PC-9 (cell line): ENCODE measurements at regions of chr2 and their contacts with region 1.

Region 1: DNA sequence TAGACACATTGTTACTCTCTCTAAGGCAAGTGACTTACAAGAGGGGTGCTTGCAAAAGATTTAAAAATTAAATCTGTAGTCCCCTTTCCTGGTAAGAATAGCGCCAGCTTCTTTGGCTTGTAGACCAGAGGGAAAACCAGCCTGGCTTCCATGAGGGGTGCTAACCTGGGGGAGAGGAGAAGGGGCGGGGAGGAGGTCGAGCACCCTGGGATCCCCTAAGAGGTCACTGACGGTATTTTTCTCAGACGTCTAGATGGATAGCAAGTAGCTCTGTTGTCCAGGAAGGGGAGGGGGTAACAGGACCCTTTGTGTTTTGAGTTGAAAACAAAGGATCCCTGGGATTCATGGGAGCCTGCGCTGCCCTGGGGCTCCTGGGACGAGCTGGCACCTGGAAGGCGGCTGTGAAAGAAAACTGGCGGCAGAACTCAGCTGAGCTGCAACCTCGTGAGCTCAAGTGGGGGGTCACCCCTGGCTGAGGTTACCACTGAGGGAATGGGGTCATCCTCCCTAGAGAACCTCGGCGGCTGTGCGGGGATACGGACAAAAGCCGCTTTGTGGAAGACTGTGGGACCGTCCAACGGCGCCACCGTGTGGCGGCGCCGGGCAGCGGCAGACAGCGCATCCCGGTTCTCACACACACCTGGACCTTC is 37.8 kb upstream of the MRPL19 start:
- DNase-seq: peak; percentile 52 to 70
- H3K4me3 ChIP-seq: peak overlapping the region; percentile 40; the same call in 1 of the 2 replicates
- H3K27ac ChIP-seq: peak overlapping the region; percentile 17; the same call in 1 of the 2 replicates
- H3K4me1 ChIP-seq: peaks cover 54% of the 10 kb centered on the region
- H3K27me3 ChIP-seq: no peaks in the 10 kb centered on the region
- CTCF ChIP-seq: peak; percentile 99

Region 2: GRCh38 chr2:75157430-75157829 is 451.4 kb before region 1 on chr2:
- CTCF ChIA-PET with region 1: no interaction called
- POLR2A ChIA-PET with region 1: no interaction called
- intact Hi-C with region 1: loop called (anchors 10 kb)
- DNase-seq: peak; percentile 10 to 58
- H3K4me3 ChIP-seq: no peak overlapping the region
- H3K27ac ChIP-seq: no peak overlapping the region
- H3K4me1 ChIP-seq: peaks cover 39% of the 10 kb centered on the region
- H3K27me3 ChIP-seq: no peaks in the 10 kb centered on the region
- CTCF ChIP-seq: peak; percentile 68

Region 3: GRCh38 chr2:75361486-75361885 is 247.3 kb before region 1 on chr2:
- CTCF ChIA-PET with region 1: no interaction called
- POLR2A ChIA-PET with region 1: no interaction called
- intact Hi-C with region 1: no loop called
- DNase-seq: no peak
- H3K4me3 ChIP-seq: no peak overlapping the region
- H3K27ac ChIP-seq: no peak overlapping the region
- H3K4me1 ChIP-seq: no peaks in the 10 kb centered on the region
- H3K27me3 ChIP-seq: no peaks in the 10 kb centered on the region
- CTCF ChIP-seq: no peak

Region 4: DNA sequence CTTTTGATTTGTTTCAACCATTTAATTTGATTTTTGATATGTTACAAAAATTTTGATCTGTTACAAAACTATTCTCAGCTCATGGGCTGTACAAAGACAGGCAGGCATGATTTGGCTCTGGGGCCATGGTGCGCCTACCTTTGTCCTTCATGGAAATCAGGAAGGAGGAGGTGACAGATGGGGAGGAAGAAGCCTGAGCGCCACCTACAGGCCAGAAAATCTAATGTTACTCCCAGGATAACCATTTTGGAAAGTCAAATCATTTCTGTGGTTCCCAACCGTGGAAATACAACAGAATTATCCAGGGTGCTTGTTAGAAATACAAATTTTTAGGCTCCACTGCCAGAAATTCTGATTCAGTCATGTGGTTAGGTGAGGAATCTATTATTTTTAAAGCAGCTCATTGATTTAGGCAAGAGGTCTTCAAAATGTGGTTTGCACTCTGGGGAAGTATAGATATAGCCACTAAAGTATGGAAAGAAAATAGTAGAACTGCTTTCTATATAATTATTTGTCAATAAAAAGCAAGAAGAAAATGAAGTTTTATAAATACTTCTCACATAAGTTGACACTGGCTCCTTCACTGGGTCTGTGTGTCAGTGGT is 142.0 kb before region 1 on chr2:
- CTCF ChIA-PET with region 1: interaction called, 14 read pairs
- POLR2A ChIA-PET with region 1: interaction called, 12 read pairs
- intact Hi-C with region 1: loop called (anchors 1 kb)
- DNase-seq: peak in 1 of 2 experiments; percentile 33
- H3K4me3 ChIP-seq: no peak overlapping the region
- H3K27ac ChIP-seq: no peak overlapping the region
- H3K4me1 ChIP-seq: peaks cover 14% of the 10 kb centered on the region; the same call in 1 of the 2 replicates
- H3K27me3 ChIP-seq: no peaks in the 10 kb centered on the region
- CTCF ChIP-seq: peak; percentile 73

Region 5: DNA sequence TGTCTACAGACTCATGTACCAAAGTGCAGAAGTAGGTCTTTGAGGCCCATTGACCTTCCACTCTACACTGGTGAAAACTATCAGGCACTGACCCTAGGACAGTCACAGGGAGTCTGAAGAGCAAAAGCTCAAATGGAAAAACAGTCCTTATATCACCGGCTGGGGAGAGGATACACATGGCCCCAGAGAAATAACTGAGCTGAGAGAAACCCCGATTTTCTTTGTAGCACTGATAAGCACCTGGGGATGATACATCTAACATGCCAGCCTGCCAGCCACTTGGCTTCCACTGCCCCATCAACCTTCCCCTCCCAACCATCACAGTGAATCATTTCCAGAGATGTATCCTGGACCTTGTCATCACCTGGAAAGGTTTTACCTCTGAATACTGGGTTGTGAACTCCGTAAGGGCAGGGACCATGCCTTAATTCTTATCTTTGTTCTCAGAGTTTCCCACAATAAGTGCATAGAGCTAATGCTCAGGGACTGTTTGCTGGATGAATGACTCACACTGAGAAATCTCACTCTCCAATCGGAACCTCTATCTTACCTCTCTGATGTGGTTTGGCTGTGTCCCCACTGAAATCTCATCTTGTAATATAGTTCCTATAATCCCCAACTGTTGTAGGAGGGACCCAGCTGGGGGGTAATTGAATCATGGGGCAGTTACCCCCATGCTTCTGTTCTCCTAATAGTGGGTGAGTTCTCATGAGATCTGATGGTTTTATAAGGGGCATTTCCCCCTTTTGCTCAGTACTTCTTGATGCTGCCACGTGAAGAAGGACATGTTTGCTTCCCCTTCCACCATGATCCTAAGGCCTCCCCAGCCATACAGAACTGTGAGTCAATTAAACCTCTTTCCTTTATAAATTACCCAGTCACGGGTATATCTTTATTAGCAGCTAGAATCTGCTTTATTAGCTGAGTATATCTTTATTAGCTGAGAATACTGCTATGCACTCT is 85.2 kb before region 1 on chr2:
- CTCF ChIA-PET with region 1: interaction called, 8 read pairs
- POLR2A ChIA-PET with region 1: no interaction called
- intact Hi-C with region 1: loop called (anchors 1 kb)
- DNase-seq: peak; percentile 52 to 99
- H3K4me3 ChIP-seq: no peak overlapping the region
- H3K27ac ChIP-seq: peak overlapping the region; percentile 17
- H3K4me1 ChIP-seq: peaks cover 59% of the 10 kb centered on the region
- H3K27me3 ChIP-seq: no peaks in the 10 kb centered on the region
- CTCF ChIP-seq: no peak

Region 6: DNA sequence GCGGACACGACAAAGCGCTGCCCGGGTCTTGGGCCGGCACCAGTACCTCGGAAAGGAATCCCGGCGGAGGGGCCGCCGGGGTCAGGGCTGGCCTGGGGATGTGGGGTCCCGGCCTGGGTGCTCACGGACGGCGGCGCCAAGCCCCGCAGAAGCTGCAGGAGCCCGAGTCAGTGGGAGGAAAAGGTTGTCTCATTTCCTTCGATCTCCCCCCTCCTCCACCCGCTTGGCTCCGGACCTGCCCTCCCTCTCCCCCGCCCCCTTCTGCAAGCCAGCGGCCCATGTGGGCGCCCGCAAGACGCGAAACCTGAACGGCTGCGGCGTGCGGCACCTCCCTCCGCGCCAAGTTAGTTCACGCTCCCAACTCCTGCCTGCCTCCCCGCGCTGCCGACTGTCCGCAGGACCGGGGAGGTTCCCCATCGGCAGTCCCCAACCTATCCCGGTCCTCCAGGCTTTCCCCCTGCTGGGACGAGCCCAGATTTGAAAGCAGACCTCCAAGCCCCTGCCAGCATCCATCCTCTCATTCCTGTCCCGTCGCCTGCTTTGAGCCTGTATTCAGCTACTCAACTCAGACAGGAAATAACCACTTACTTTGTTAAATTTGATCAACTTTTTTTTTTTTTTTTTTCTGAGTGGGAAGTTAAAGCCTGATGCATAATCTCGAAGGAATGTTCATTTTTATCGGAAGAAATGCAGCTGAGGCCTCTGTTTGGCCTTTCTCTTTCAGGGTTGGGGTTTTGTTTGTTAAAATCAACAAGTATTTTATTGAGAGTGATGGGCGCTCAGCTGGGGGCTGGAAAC is 47.8 kb before region 1 on chr2 and contains the start of gene EVA1A:
- CTCF ChIA-PET with region 1: interaction called, 19 read pairs
- POLR2A ChIA-PET with region 1: interaction called, 3 read pairs
- intact Hi-C with region 1: loop called (anchors 1 kb)
- DNase-seq: peak; percentile 61 to 68
- H3K4me3 ChIP-seq: peak within 1 kb of the TSS; percentile 74
- H3K27ac ChIP-seq: peak within 1 kb of the TSS; percentile 42
- H3K4me1 ChIP-seq: peaks cover 28% of the 10 kb centered on the region
- H3K27me3 ChIP-seq: no peaks in the 10 kb centered on the region
- CTCF ChIP-seq: no peak
- total RNA-seq, gene EVA1A: 10.8 and 18.2 TPM in 2 replicates

Region 7: GRCh38 chr2:75574114-75574513 is 34.7 kb before region 1 on chr2:
- CTCF ChIA-PET with region 1: interaction called, 7 read pairs
- POLR2A ChIA-PET with region 1: no interaction called
- intact Hi-C with region 1: loop called (anchors 1 kb)
- DNase-seq: no peak
- H3K4me3 ChIP-seq: no peak overlapping the region
- H3K27ac ChIP-seq: no peak overlapping the region
- H3K4me1 ChIP-seq: peaks cover 27% of the 10 kb centered on the region
- H3K27me3 ChIP-seq: no peaks in the 10 kb centered on the region
- CTCF ChIP-seq: peak; percentile 51; the same call in 1 of the 2 replicates

Region 8: DNA sequence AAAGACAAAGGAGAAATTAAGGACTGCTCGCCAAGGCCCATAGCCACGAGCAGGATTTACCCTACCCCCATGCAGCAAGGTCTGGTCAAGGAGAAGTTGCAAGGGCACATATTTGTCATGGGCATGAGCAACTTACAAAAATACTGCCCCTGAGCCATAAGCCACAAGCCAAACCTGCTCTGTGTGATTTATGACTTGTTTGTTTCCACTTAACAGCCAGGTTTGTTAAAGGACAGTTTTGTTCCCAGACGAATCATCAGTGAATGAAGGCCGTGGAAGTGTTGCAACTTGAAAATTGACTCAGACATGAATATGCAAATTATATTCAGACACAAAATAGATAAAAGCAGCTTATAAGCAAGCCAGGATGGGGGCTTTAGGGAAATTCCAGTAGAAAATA is 16.8 kb before region 1 on chr2:
- CTCF ChIA-PET with region 1: interaction called, 6 read pairs
- POLR2A ChIA-PET with region 1: interaction called, 17 read pairs
- intact Hi-C with region 1: loop called (anchors 2 kb)
- DNase-seq: peak; percentile 65 to 99
- H3K4me3 ChIP-seq: no peak overlapping the region
- H3K27ac ChIP-seq: peak overlapping the region; percentile 84
- H3K4me1 ChIP-seq: peaks cover 59% of the 10 kb centered on the region
- H3K27me3 ChIP-seq: no peaks in the 10 kb centered on the region
- CTCF ChIP-seq: no peak